ENCODE measurements at regions of chr11 and their contacts with region 1.

Region 1: DNA sequence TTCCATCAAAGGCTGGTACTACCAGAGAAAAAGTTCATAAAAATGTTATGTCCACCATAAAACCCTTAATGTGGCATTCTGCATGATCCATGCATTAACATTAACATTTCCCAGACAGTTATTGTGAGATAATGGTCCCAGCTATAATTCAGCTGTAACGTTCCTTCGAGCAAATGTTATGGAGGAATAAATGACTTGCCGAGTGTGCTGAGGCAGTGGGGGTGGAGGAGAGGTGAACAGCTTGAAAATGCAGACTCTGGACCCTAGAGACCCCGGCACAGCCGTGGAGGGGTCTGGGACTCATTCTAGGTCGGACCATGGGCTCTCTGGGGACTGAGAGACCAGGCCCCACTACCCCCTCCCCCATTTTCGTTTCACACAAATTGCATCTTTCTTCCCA is 141.9 kb downstream of the PKNOX2 start:
- DNase-seq: no peak
- H3K4me3 ChIP-seq: no peak overlapping the region
- H3K27ac ChIP-seq: no peak overlapping the region
- H3K4me1 ChIP-seq: no peaks in the 10 kb centered on the region
- H3K27me3 ChIP-seq: no peaks in the 10 kb centered on the region
- CTCF ChIP-seq: no peak
- POLR2A ChIP-seq: no peak

Region 2: GRCh38 chr11:125229916-125230315 is 76.6 kb before region 1 on chr11:
- intact Hi-C with region 1: loop called (anchors 2 kb)
- DNase-seq: no peak
- H3K4me3 ChIP-seq: no peak overlapping the region
- H3K27ac ChIP-seq: no peak overlapping the region
- H3K4me1 ChIP-seq: no peaks in the 10 kb centered on the region
- H3K27me3 ChIP-seq: no peaks in the 10 kb centered on the region
- CTCF ChIP-seq: no peak
- POLR2A ChIP-seq: no peak